Common myeloid progenitor, CD34-positive (primary cell): ENCODE measurements at regions of chr1 and their contacts with region 1.

Region 1: DNA sequence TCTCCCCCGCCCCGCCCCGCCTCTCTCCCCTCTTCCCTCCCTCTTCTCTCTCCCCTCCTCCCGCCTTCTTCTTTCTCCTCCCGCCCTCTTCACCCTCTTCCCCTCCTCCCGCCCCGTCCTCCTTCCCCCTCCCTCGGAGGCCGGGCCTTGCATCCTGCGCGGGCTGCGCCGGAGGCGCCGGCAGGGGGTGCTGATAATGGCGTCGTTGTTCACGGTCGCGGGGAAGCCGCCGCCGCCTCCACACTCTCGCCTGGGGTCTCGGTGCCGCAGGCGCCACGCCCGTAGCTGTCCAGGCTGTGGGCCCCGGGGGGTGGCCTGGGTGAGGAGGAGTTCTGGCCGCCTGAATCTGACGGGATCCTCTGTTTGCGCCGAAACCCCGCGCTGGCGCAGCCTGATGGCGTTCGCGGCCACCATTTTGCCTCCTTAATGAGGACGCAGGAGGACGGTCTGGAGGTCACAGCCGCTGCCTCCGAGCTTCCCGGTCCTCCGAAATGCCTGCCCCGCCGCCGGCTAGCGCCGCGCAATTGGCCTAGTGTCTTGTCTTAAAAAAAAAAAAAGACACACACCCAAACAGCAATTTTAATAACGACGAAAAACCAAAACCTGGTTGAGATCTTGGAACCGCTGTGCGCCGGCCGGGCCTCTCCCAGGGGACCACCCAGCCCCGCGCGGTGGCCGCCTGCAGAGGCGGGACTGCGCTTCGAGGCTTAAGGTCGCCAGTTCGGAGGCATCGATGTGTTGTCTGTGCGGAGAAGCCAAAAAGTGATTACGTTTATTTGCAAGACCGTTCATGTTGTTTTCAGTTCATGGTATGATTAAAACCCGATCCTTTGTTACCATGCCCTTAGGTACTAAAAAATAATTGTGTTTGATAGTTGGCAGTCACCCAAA is 106.6 kb upstream of the HNRNPU start:
- DNase-seq: peak; percentile 96 to 98 (median 97)
- H3K4me3 ChIP-seq: peak overlapping the region; percentile 49 to 92 (median 80)
- H3K27ac ChIP-seq: peak overlapping the region; percentile 100
- H3K4me1 ChIP-seq: peaks cover 6 to 30% (median 18%) of the 10 kb centered on the region in 4 experiments
- H3K27me3 ChIP-seq: no peaks in the 10 kb centered on the region

Region 2: DNA sequence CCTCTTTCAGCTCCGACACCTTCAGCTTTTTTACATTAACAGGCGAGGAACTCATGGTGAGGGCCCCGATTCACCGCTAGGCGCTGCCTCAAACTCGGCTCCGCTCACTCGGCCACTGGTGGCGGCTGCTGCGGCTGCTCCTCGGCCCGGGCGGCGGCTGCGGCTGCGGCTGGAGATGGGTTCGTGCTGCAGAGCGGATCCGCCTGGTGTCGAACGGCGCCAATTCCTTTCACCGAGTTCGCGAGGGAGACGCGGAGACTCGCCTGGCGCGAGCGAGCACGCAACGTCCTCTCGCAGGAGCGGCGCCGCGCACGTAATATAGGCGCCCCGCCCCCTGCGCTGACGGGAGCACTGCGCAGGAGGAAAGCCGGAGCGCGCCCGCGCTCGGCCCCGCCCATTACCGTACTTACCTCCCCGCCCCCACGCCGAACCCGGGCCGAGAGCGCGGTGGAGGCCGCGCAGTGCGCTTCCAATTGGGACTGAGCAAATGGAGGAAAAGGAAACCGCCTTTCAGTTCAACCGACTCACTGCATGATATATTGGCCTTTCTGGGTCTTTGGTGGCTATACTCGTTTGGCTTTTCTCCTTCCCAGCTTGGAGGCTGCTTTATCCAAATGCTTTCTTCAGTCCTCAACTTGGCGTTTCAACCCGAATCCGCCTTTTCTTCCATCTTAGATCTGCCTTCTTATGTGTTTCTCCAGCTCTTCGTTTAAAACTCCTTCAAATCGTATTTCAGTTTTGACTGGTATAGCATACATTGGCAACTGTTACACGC is 106.5 kb before region 1 on chr1 and contains the start of gene HNRNPU:
- CTCF ChIA-PET with region 1: interaction called, 7 read pairs
- POLR2A ChIA-PET with region 1: interaction called, 12 read pairs
- DNase-seq: peak; percentile 97 to 98 (median 98)
- H3K4me3 ChIP-seq: peak within 1 kb of the TSS; percentile 97 to 100 (median 99)
- H3K27ac ChIP-seq: peak within 1 kb of the TSS; percentile 97 to 99
- H3K4me1 ChIP-seq: peaks cover 25 to 56% (median 39%) of the 10 kb centered on the region in 4 experiments
- H3K27me3 ChIP-seq: no peaks in the 10 kb centered on the region